ENCODE measurements at regions of chr2 and their contacts with region 1.

Region 1: GRCh38 chr2:231648587-231649174 is 56.0 kb downstream of the TEX44 start:
- DNase-seq: peak; percentile 72 to 87
- ATAC-seq: peak; percentile 94 to 97 (median 95)
- H3K4me3 ChIP-seq: no peak overlapping the region
- H3K27ac ChIP-seq: no peak overlapping the region
- H3K4me1 ChIP-seq: peaks cover 14% of the 10 kb centered on the region
- H3K27me3 ChIP-seq: no peaks in the 10 kb centered on the region
- CTCF ChIP-seq: peak; percentile 81

Region 2: DNA sequence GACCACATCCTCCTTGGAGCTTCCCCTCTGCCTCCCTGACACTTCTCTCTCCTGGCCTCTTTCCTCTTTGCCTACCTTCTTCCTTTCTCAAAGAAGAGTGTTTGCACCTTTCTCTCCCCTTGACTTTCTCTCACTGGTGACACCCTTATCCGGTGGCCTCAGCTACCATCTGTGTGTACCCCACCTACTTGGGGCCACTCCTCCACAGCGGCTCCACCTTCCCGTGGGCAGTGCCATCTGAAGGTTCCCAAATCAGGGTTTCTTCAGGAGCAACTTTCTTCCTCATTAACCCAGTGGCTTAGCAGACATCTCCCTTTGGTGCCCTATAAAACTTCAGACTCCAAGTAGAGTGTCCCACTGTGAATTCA is 179.1 kb before region 1 on chr2:
- intact Hi-C with region 1: no loop called
- DNase-seq: no peak
- ATAC-seq: no peak
- H3K4me3 ChIP-seq: no peak overlapping the region
- H3K27ac ChIP-seq: no peak overlapping the region
- H3K4me1 ChIP-seq: peaks cover 6% of the 10 kb centered on the region
- H3K27me3 ChIP-seq: no peaks in the 10 kb centered on the region
- CTCF ChIP-seq: no peak

Region 3: DNA sequence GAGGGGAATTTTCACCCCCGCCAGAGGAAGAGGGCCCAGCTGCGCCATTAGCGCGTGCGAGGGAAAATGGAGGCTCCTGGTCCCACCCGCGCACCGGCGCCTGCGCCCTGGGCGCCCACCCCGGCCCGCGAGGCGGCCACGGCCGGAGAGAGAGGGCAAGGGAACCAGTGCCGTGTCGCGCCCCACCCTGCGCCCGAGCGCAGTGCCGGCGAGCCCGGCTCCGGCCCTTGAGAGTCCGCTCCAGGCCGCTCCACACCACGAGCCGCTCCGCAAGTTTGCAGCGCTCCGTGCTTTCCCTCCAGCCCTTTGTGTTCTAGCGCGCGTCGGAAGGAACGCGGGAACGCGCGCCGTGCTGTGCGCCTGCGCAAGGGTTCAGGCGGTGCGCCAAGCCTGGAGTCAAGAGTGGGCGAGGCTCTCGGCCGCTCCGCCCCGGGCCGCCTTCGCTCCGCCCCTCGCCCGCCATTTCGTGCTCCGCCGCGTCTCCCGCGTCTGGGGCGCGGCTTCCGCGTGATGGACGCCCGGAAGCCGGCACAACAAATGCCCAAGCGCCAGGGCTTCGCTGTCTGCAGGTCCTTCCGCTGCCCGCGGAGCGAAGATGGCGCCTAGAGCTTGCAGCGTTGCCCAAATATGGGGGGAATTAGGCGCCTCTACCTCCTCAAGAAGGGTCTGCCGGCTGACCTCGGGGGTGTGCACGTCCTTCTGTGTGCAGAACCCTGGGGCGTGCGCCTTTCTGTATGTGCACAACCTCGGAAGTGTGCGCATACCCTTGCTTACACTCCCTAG is 13.5 kb after region 1 on chr2:
- intact Hi-C with region 1: loop called in 1 of 2 experiments (anchors 1 kb)
- DNase-seq: peak; percentile 97 to 99
- ATAC-seq: peak; percentile 76 to 79 (median 78)
- H3K4me3 ChIP-seq: peak overlapping the region; percentile 67
- H3K27ac ChIP-seq: peak overlapping the region; percentile 97
- H3K4me1 ChIP-seq: peaks cover 17% of the 10 kb centered on the region
- H3K27me3 ChIP-seq: no peaks in the 10 kb centered on the region
- CTCF ChIP-seq: no peak

Region 4: GRCh38 chr2:231674587-231675338 is 26.1 kb after region 1 on chr2:
- intact Hi-C with region 1: loop called (anchors 2 kb)
- DNase-seq: peak; percentile 77 to 87
- ATAC-seq: peak; percentile 60 to 81 (median 68)
- H3K4me3 ChIP-seq: no peak overlapping the region
- H3K27ac ChIP-seq: peak overlapping the region; percentile 80
- H3K4me1 ChIP-seq: peaks cover 15% of the 10 kb centered on the region
- H3K27me3 ChIP-seq: no peaks in the 10 kb centered on the region
- CTCF ChIP-seq: peak; percentile 73

Region 5: GRCh38 chr2:231713730-231714430 is 65.2 kb after region 1 on chr2:
- intact Hi-C with region 1: loop called in 1 of 2 experiments (anchors 2 kb)
- DNase-seq: peak; percentile 89 to 95
- ATAC-seq: peak; percentile 50 to 67 (median 60)
- H3K4me3 ChIP-seq: no peak overlapping the region
- H3K27ac ChIP-seq: peak overlapping the region; percentile 48
- H3K4me1 ChIP-seq: peaks cover 39% of the 10 kb centered on the region
- H3K27me3 ChIP-seq: no peaks in the 10 kb centered on the region
- CTCF ChIP-seq: peak; percentile 93

Measured in psoas muscle (tissue), 8 donors.